A673 (cell line): ENCODE measurements at regions of chr15 and their contacts with region 1.

Region 1: GRCh38 chr15:52783929-52784798 is 6.0 kb downstream of the ONECUT1 start:
- DNase-seq: peak; percentile 63
- H3K4me3 ChIP-seq: no peak overlapping the region
- H3K27ac ChIP-seq: no peak overlapping the region
- H3K4me1 ChIP-seq: no peaks in the 10 kb centered on the region
- H3K27me3 ChIP-seq: peaks cover 95% of the 10 kb centered on the region
- CTCF ChIP-seq: peak; percentile 73

Region 2: GRCh38 chr15:53197426-53197839 is 413.3 kb after region 1 on chr15:
- CTCF ChIA-PET with region 1: interaction called, 5 read pairs
- POLR2A ChIA-PET with region 1: no interaction called
- intact Hi-C with region 1: loop called (anchors 1 kb)
- DNase-seq: peak; percentile 75
- H3K4me3 ChIP-seq: no peak overlapping the region
- H3K27ac ChIP-seq: no peak overlapping the region
- H3K4me1 ChIP-seq: no peaks in the 10 kb centered on the region
- H3K27me3 ChIP-seq: peaks cover 4% of the 10 kb centered on the region
- CTCF ChIP-seq: peak; percentile 92

Region 3: DNA sequence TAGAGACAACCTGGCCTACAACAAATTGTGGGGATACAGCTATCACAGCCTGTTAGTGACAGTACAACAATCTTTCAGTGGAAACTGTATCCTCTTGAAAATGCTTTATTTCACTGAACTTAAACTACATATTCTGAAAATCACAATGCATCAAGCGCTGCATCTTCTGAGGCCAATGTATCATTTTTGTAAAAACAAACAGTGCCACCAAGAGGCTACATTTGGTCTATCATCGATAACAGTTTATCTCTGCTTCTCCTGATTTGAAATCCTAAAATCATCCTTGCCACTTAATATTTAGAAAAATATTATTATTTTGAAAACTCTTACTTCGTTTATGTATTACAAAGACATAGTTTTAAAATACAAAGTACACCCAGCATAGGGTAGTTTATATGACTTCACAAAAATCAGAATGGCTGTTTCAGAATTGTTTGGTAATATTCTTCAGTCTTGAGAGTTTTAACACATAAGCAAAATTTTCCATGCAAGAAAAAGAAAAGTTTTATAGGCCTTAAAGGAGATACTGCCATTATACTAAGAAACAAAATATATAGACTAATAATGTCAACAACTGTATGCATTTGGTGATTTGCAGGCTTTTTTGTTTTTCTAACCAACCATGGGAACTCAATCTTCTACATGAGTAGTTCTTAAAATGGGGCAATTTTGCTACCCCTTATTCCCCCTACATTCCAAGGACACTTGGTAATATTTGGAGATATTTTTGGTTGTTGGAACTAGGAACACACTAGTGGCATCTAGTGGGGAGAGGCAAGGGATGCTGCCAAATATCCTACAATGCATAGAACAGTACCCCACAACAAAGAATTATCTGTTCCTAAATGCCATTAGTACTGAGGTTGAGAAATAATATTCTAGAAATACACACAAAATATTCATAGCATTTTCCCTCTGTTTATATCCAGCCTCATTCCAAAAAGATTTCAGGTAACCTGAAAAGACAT is 933.0 kb after region 1 on chr15:
- CTCF ChIA-PET with region 1: no interaction called
- POLR2A ChIA-PET with region 1: no interaction called
- intact Hi-C with region 1: loop called (anchors 2 kb)
- DNase-seq: peak; percentile 14
- H3K4me3 ChIP-seq: no peak overlapping the region
- H3K27ac ChIP-seq: no peak overlapping the region
- H3K4me1 ChIP-seq: no peaks in the 10 kb centered on the region
- H3K27me3 ChIP-seq: peaks cover 8% of the 10 kb centered on the region
- CTCF ChIP-seq: peak; percentile 46